Esophagus muscularis mucosa (tissue), 4 donors: ENCODE measurements at regions of chr4 and their contacts with region 1.

Region 1: DNA sequence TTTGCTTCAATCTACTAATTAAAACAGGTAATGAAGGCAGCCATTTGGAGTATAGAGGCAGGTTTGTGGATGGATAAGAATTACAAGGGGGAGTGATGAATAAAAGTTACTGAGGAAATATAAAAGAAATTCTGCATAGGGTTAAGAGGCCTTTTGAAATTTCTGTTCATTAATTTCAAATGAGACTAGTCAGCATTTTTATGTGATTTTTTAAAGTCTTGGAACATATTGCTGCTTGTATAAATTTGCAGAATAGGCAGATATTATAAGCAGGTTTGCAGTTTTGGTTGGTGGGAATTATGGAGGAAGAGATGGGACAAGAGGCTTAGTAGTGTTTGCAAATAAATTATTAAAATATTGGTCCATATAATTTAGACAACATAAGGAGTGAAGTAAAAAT is 750.4 kb upstream of the AGA start:
- DNase-seq: no peak
- H3K4me3 ChIP-seq: no peak overlapping the region
- H3K27ac ChIP-seq: no peak overlapping the region
- H3K4me1 ChIP-seq: no peaks in the 10 kb centered on the region
- H3K27me3 ChIP-seq: no peaks in the 10 kb centered on the region
- CTCF ChIP-seq: no peak
- EP300 ChIP-seq: no peak
- POLR2A ChIP-seq: no peak

Region 2: GRCh38 chr4:177937041-177937440 is 255.6 kb before region 1 on chr4:
- intact Hi-C with region 1: no loop called
- DNase-seq: no peak
- H3K4me3 ChIP-seq: no peak overlapping the region
- H3K27ac ChIP-seq: no peak overlapping the region
- H3K4me1 ChIP-seq: no peaks in the 10 kb centered on the region
- H3K27me3 ChIP-seq: no peaks in the 10 kb centered on the region
- CTCF ChIP-seq: no peak
- EP300 ChIP-seq: no peak
- POLR2A ChIP-seq: no peak

Region 3: GRCh38 chr4:178174756-178175155 is 17.9 kb before region 1 on chr4:
- intact Hi-C with region 1: loop called (anchors 2 kb)
- DNase-seq: no peak
- H3K4me3 ChIP-seq: no peak overlapping the region
- H3K27ac ChIP-seq: no peak overlapping the region
- H3K4me1 ChIP-seq: no peaks in the 10 kb centered on the region
- H3K27me3 ChIP-seq: no peaks in the 10 kb centered on the region
- CTCF ChIP-seq: no peak
- EP300 ChIP-seq: no peak
- POLR2A ChIP-seq: no peak

Region 4: DNA sequence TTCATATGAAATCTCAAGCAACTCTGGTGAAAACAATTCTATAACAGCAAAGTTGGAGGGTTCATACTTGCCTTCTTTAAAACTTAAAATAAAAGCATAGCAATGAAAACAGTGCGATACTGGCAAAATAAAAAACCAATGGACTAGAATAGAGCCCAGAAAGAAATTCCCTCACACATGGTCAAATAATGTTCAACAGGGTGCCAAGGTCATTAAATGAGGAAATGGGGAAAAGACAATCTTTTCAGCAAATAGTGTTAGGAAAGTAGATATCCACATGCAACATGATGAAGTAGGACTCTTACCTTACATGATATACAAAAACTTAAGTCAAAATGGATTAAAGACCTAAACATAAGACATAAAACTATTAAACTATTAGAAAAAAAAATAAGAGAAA is 219.8 kb after region 1 on chr4:
- intact Hi-C with region 1: no loop called
- DNase-seq: no peak
- H3K4me3 ChIP-seq: no peak overlapping the region
- H3K27ac ChIP-seq: no peak overlapping the region
- H3K4me1 ChIP-seq: no peaks in the 10 kb centered on the region
- H3K27me3 ChIP-seq: no peaks in the 10 kb centered on the region
- CTCF ChIP-seq: no peak
- EP300 ChIP-seq: no peak
- POLR2A ChIP-seq: no peak